Activated naive CD4-positive, alpha-beta T cell treated with anti-CD3 and anti-CD28 coated beads for 36 hours (primary cell): ENCODE measurements at regions of chr6 and their contacts with region 1.

Region 1: DNA sequence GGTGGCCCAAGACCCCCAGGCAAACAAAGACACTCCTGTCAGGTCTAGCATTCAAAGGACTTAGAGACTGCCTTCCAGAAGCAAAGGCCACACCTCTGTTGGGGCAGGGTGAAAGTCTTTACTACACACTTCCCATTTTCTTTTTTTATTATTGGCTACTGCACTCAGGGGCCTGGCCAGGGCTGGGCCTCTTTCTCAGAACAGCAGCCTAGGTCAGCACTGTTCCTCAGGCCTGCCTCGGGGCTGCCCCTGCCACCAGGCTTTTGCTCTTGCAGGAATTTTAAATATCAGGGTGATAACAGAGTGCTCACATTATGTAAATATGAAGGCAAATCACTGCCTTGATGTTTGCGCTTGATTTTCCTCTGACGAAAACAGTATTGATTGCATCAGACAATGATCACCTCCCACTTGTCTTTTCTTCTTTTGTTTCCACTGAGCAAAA is 18.5 kb downstream of the GSTA4 start:
- DNase-seq: peak; percentile 74
- H3K4me3 Mint-ChIP-seq: peak overlapping the region; percentile 12
- H3K27ac Mint-ChIP-seq: peak overlapping the region; percentile 92
- H3K4me1 Mint-ChIP-seq: peaks cover 34% of the 10 kb centered on the region
- H3K27me3 Mint-ChIP-seq: peaks cover 10% of the 10 kb centered on the region

Region 2: DNA sequence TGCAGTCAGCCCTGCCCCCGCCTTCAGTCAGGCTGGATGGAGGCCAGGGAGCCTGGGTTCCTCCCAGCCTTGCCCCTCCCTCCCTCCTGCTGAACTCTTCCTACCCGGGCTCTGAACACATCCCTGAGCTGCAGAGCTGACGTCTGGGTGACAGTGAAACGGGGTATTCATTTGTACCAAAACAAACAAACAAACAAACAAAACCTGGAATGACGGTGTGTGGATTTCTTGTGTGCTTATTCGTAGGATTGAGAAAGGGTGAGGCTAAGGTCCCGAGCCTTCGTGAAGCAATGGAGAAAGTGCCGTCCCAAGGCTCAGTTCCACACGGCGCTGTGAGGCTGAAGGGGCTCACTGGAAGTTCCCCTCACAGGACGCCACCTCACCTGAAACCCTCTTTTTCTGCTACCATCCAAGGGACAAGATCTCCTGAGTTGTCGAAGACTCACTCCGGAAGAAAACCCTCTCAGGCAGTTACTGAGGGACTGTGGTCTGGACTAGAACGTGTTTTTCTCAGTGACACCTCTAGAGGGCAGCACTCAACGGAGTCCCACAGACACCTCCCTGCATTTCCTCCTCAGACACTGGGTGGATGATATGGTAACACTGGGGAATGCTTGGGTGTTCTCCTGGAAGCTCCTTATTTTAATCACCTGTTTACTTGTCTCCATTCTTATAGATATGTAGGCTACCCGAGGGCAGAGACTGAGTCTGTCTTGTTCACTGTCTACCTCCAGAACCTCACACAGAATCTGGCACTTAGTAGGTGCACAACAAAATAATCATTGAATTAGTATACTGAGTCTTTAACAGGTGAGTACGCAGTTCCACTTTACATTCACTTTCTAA is 94.4 kb before region 1 on chr6:
- CTCF ChIA-PET with region 1: no interaction called
- intact Hi-C with region 1: loop called (anchors 1 kb)
- DNase-seq: peak; percentile 84
- H3K4me3 Mint-ChIP-seq: peak overlapping the region; percentile 71
- H3K27ac Mint-ChIP-seq: peak overlapping the region; percentile 27
- H3K4me1 Mint-ChIP-seq: peaks cover 5% of the 10 kb centered on the region
- H3K27me3 Mint-ChIP-seq: peaks cover 2% of the 10 kb centered on the region

Region 3: DNA sequence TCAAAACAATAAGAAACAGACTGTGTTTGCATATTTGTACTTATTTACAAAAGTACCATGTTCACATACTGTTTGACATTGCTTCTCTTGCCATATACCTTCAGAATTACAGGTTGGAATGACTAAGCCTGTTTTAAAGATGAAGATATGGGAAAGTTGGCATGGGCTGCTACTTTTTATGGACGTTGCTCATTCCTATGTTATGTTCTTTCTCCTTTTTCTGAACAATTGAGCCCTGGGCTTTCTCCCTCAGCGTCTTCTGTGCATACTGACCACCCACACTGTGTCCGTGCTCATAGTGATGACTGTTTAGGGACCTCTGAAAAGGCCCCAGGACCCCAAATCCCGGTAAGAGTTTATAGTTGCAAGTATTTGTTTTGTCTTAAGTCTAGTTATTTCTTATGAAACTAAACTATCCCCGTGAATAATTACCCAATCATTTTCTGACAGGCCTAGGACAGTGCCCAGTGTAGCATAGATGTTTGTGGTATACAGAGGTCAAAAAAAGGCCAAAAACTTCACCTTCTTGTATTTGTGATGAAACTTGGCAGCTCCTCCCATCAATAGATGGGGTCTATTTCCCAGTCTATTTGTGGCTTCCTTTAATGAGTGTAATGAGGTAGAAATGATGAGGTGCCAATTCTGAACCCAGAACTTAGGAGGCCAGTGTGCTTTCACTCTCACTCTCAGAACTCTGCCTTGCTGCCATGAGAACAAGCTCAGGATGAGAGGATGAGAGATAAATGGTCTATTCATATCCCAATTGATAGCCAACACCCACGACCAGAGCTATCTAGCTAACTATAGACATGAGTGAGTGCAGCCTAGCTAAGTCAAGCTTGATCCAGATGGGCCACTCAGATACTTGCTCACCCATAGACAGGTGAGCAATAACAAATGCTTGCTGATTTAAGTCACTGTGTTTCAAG is 22.4 kb before region 1 on chr6:
- CTCF ChIA-PET with region 1: no interaction called
- intact Hi-C with region 1: loop called (anchors 1 kb)
- DNase-seq: peak; percentile 18
- H3K4me3 Mint-ChIP-seq: no peak overlapping the region
- H3K27ac Mint-ChIP-seq: no peak overlapping the region
- H3K4me1 Mint-ChIP-seq: peaks cover 3% of the 10 kb centered on the region
- H3K27me3 Mint-ChIP-seq: peaks cover 2% of the 10 kb centered on the region

Region 4: DNA sequence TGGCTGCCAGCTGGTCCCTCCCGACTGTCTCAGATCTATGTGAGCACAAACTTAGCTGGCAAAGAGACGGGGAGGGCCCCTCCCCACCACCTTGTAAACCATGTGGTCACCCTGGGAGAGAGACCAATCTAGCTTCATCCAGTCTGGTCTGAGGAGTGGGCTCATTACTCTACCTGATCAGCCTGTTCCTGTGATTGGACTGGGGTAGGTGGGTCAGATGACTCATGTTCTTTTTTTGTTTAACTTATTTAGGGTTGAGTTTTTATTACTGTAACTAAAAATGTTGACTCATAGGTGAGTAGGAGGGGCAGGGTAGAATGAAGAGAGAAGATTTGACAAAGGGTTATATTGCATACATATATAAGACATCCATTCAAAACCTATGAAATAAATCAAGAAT is 13.7 kb after region 1 on chr6:
- CTCF ChIA-PET with region 1: interaction called, 4 read pairs
- intact Hi-C with region 1: loop called (anchors 1 kb)
- DNase-seq: peak; percentile 59
- H3K4me3 Mint-ChIP-seq: peak overlapping the region; percentile 41
- H3K27ac Mint-ChIP-seq: peak overlapping the region; percentile 92
- H3K4me1 Mint-ChIP-seq: peaks cover 60% of the 10 kb centered on the region
- H3K27me3 Mint-ChIP-seq: peaks cover 14% of the 10 kb centered on the region

Region 5: DNA sequence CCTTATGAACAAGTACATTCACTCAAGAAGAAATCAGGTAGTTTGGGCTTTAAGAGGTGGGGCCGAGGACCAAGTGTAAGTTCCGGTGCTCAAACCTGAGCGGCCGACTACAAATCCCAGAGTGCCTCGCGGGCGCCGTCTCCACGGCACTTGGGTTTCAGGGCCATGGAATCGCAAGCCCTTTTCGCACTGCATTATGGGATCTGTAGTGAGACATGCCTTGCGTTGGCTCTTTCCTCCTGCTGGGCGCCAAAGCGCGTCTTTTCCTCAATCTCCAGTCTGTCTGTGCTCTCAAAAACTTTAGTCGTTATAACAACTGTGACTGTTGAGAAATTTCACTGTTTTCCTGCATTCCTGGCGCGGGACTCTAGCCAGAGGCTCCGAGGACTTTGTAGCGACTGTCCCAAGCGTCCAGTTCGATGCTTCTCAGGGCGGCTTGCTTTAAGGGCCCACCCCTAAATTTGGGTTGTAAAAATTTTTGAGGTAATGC is 88.2 kb after region 1 on chr6:
- CTCF ChIA-PET with region 1: no interaction called
- intact Hi-C with region 1: loop called (anchors 1 kb)
- DNase-seq: peak; percentile 99
- H3K4me3 Mint-ChIP-seq: peak overlapping the region; percentile 97
- H3K27ac Mint-ChIP-seq: peak overlapping the region; percentile 99
- H3K4me1 Mint-ChIP-seq: peaks cover 55% of the 10 kb centered on the region
- H3K27me3 Mint-ChIP-seq: no peaks in the 10 kb centered on the region

Region 6: GRCh38 chr6:53524455-53524815 is 547.8 kb after region 1 on chr6:
- CTCF ChIA-PET with region 1: no interaction called
- intact Hi-C with region 1: no loop called
- DNase-seq: no peak
- H3K4me3 Mint-ChIP-seq: no peak overlapping the region
- H3K27ac Mint-ChIP-seq: no peak overlapping the region
- H3K4me1 Mint-ChIP-seq: peaks cover 4% of the 10 kb centered on the region
- H3K27me3 Mint-ChIP-seq: no peaks in the 10 kb centered on the region

Region 7: DNA sequence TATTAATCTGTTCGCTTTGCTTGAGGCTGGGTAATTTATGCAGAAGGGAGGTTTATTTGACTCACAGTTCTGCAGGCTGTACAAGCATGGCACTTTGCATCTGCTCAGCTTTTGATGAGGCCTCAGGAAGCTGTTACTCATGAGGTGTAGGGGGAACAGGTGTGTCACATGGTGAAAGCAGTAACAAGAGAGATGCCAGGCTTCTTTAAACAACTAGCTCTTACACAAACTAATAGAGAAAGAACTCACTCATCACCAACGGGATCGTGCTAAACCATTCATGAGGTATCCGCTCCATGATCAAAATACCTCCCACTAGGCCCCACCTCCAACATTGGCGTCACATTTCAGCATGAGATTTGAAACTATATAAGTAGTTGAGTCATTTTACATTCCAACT is 602.7 kb after region 1 on chr6:
- CTCF ChIA-PET with region 1: no interaction called
- intact Hi-C with region 1: loop called (anchors 1 kb)
- DNase-seq: peak; percentile 70
- H3K4me3 Mint-ChIP-seq: no peak overlapping the region
- H3K27ac Mint-ChIP-seq: no peak overlapping the region
- H3K4me1 Mint-ChIP-seq: peaks cover 19% of the 10 kb centered on the region
- H3K27me3 Mint-ChIP-seq: no peaks in the 10 kb centered on the region